AG04449 (cell line): ENCODE measurements at regions of chr11 and their contacts with region 1.

Region 1: GRCh38 chr11:122505304-122506006 is 150.1 kb upstream of the UBASH3B start:
- DNase-seq: peak; percentile 91
- H3K4me3 ChIP-seq: no peak overlapping the region
- CTCF ChIP-seq: peak; percentile 86

Region 2: DNA sequence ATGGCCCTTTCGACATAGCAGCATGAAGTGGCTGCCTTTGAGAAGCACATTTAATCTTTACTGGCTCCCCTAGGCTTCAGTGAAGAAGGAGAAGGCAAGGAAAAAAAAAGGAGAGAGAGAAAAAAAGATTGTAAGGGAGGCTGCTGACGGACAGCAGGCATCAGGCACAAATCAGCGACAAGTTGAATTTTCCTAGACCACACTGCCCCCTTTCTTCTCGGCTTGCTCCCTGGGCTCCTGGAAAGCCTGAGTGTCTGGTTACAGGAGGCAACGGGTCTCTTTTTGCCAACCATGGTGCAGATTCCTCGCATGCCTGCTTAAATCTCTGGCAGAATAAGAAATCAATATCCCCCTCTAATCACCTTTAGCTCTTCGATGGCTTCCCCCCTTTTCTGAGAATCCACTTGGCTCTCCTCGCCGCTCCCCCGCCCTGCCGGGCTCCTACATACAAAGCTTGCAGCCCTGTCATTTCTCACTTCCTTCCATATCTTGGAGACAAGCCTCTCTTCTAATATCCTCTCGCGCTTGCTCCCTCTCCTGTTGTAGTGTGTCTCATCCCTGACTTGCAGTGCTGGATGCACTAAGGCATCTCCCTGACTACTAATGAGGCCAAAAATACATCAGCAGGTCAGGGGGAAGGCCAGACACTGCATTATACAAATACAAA is 403.7 kb before region 1 on chr11:
- CTCF ChIA-PET with region 1: interaction called, 17 read pairs
- POLR2A ChIA-PET with region 1: interaction called, 3 read pairs
- DNase-seq: no peak
- H3K4me3 ChIP-seq: peak overlapping the region; percentile 82
- CTCF ChIP-seq: peak; percentile 72

Region 3: DNA sequence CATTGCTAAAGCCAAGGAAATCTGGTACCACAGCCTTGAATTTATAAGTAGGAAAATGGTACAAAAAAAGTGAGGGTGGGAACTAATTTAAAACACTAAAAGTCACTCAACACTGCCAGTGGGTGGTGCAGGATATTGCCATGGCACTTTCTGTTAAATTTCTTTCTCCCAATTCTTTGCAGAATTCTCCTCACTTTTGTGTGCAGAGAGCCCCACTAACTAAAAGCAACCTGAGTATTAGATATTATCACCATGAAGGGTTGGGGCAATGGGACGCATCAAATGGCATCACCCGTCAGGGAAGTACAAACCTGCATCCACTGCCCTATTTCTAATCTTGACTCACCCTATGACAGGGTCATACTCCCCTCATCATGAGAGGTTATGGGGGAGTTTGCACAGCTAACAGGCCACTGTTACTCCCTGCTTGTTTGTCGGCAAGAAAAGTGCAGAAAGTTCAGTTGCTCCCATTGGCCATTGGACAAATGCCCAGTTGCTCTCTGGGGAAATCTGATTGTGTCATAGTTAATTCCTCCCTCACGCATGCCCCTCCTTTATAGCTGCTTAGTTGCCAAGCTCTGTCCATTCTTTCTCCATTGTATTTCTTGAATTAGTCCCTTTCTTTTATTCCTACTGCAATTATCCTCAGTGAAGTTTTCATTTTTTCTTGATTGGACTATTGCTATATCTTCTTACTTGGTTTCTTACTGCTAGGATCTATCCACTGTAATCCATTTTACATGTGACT is 295.7 kb before region 1 on chr11:
- CTCF ChIA-PET with region 1: interaction called, 80 read pairs
- POLR2A ChIA-PET with region 1: interaction called, 19 read pairs
- DNase-seq: no peak
- H3K4me3 ChIP-seq: no peak overlapping the region
- CTCF ChIP-seq: no peak

Region 4: DNA sequence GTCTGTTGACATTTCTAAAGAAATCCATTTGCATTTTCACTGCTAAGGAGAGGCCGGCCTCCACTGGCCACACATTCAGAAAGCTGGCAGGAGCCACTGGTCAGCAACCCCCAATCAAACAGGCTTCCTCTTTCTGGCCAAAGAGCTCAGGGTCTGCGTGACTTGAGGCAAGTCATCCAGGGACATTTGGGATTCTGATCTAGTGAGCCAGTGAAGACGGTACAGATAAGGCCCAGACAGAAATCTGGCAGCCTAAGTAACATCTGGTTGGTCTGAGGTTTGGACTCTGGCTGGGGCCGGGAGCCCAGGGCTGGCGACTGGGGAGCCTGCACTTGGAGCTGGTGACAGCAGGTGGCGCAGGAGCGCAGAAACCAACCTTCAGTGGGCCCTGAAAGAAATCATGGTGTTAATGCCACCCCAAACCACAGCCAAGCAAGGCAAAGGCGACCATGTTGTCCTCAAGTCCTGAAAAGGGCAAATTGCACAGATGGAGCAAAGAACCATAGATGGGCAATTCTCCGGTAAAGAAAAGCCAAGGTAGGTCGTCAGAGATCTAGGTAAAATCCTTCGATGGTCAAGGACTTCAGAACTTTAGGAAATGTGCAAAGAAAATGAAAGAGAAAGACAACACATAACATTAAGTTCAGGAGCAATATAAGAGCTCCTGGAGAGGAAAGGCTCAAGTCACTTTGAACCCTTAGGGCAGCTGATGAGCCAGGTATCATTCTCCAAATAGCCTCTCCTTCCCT is 290.0 kb before region 1 on chr11:
- CTCF ChIA-PET with region 1: interaction called, 80 read pairs
- POLR2A ChIA-PET with region 1: interaction called, 19 read pairs
- DNase-seq: peak; percentile 96
- H3K4me3 ChIP-seq: no peak overlapping the region
- CTCF ChIP-seq: peak; percentile 92

Region 5: GRCh38 chr11:122229481-122230384 is 275.7 kb before region 1 on chr11:
- CTCF ChIA-PET with region 1: interaction called, 11 read pairs
- POLR2A ChIA-PET with region 1: interaction called, 3 read pairs
- DNase-seq: no peak
- H3K4me3 ChIP-seq: no peak overlapping the region
- CTCF ChIP-seq: no peak

Region 6: DNA sequence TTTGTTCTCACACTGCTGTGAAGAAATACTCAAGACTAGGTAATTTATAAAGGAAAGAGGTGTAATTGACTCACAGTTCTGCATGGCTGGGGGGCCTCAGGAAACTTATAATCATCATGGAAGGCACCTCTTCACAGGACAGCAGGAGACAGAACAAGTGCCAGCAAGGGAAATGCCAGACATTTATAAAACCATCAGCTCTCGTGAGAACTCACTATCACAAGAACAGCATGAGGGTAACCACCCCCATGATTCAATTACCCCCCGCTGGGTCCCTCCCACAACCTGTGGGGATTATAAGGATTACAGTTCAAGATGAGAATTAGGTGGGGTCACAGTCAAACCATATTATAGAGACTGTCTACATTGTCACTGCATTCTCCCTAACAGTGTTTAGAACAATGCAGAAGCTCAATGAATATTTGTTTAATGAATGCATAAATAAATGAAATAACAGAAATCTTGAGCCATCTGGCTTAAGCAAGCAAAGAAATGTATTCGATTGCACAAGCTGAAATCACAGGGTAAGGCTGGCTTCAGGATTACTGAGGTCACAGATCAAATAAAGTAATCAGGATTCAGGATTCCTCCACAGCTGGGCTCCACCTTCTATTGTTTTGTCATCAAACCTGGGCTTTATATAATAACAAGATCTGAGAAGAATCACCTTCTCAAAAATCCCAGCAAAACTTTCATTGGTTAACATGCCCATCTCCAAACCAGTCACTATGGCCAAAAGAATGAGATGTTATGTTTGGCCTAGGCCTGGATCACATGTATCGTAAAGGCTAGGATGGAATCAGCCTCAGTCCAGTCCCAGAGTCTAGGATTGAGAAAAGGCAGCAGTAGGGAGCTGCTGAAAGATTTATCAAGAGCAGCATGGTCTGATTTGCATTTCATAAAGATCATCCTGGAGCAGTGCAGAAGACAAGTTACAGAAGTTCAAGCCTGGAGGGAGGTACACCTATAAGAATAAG is 12.2 kb after region 1 on chr11:
- CTCF ChIA-PET with region 1: interaction called, 11 read pairs
- POLR2A ChIA-PET with region 1: no interaction called
- DNase-seq: no peak
- H3K4me3 ChIP-seq: no peak overlapping the region
- CTCF ChIP-seq: no peak